ENCODE measurements at regions of chr5 and their contacts with region 1.

Region 1: DNA sequence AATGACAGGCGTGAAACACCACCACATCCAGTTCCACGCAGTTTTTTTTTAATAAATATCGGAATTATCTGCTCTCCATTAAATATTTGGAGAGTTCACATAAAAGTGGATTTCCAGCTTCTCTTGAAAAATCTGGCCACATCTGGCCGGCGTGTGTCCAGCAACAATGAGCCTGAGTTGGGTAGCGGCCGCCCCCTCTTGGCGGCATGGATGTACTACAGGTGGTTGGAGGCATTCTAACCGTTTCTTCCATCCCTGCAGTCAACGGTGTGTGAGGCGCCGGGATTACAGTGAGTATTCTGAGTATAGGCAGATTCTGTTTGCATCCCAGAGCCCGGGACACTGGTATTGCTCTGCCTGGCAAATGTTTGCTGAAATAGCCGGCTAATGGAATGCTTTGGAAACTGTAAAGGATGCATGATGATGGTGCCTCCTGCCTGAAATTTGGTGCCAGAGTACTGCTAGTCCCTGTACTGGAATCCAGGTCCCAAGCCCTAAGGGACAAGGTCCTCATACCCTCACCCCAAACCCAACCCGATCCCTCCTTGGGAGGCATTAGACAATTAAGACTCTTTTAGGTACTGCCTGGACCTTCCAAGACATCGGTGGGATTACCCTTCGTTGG is 13.6 kb upstream of the GM2A start:
- DNase-seq: peak in 8 of 9 experiments; percentile 38 to 77 (median 63)
- ATAC-seq: peak; percentile 87
- H3K4me3 ChIP-seq: no peak overlapping the region
- H3K4me3 Mint-ChIP-seq: peak overlapping the region; percentile 57
- H3K27ac ChIP-seq: no peak overlapping the region
- H3K27ac Mint-ChIP-seq: no peak overlapping the region
- H3K4me1 ChIP-seq: peaks cover 23% of the 10 kb centered on the region
- H3K4me1 Mint-ChIP-seq: peaks cover 38% of the 10 kb centered on the region
- H3K27me3 ChIP-seq: no peaks in the 10 kb centered on the region
- H3K27me3 Mint-ChIP-seq: no peaks in the 10 kb centered on the region
- CTCF ChIP-seq: peak; percentile 100

Region 2: DNA sequence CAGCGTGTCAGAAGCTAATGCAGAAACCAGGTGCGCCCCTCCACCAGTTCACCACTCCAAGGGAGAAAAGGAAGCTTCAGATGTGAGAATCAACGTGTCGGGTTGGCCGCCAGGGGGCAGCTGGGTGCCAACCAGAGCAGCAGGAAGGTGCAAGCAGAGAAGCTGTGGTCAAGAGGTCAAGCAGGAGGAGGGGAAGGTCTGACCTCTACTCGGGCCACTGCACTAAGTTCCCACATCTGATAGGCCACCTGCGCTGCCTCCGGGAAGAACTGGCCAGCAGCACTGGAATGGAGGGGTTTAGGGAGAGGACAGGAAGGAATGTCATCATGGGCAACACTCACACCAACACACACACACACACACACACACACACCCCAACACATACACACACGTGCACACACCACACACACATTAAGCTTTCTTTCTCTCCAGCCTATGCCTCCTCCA is 113.1 kb before region 1 on chr5:
- CTCF ChIA-PET with region 1: interaction called, 61 read pairs
- POLR2A ChIA-PET with region 1: interaction called, 8 read pairs
- intact Hi-C with region 1: loop called (anchors 1 to 2 kb)
- DNase-seq: peak; percentile 34 to 82 (median 66)
- ATAC-seq: peak; percentile 37
- H3K4me3 ChIP-seq: no peak overlapping the region
- H3K4me3 Mint-ChIP-seq: no peak overlapping the region
- H3K27ac ChIP-seq: peak overlapping the region; percentile 12 to 54
- H3K27ac Mint-ChIP-seq: peak overlapping the region; percentile 92
- H3K4me1 ChIP-seq: peaks cover 41% of the 10 kb centered on the region
- H3K4me1 Mint-ChIP-seq: peaks cover 54% of the 10 kb centered on the region
- H3K27me3 ChIP-seq: no peaks in the 10 kb centered on the region
- H3K27me3 Mint-ChIP-seq: no peaks in the 10 kb centered on the region
- CTCF ChIP-seq: peak; percentile 78

Region 3: GRCh38 chr5:151141535-151141934 is 97.8 kb before region 1 on chr5:
- CTCF ChIA-PET with region 1: interaction called, 10 read pairs
- POLR2A ChIA-PET with region 1: interaction called, 4 read pairs
- intact Hi-C with region 1: no loop called
- DNase-seq: peak in 8 of 9 experiments; percentile 42 to 85 (median 69)
- ATAC-seq: peak; percentile 51
- H3K4me3 ChIP-seq: peak overlapping the region; percentile 10 to 43
- H3K4me3 Mint-ChIP-seq: peak overlapping the region; percentile 82
- H3K27ac ChIP-seq: peak overlapping the region; percentile 26 to 90
- H3K27ac Mint-ChIP-seq: peak overlapping the region; percentile 95
- H3K4me1 ChIP-seq: peaks cover 93% of the 10 kb centered on the region
- H3K4me1 Mint-ChIP-seq: peaks cover 98% of the 10 kb centered on the region
- H3K27me3 ChIP-seq: no peaks in the 10 kb centered on the region
- H3K27me3 Mint-ChIP-seq: no peaks in the 10 kb centered on the region
- CTCF ChIP-seq: no peak

Region 4: GRCh38 chr5:151150471-151151262 is 88.7 kb before region 1 on chr5:
- CTCF ChIA-PET with region 1: interaction called, 16 read pairs
- POLR2A ChIA-PET with region 1: no interaction called
- intact Hi-C with region 1: no loop called
- DNase-seq: peak; percentile 48 to 91 (median 80)
- ATAC-seq: peak; percentile 83
- H3K4me3 ChIP-seq: peak overlapping the region in 1 of 2 experiments; percentile 37
- H3K4me3 Mint-ChIP-seq: peak overlapping the region; percentile 75
- H3K27ac ChIP-seq: peak overlapping the region; percentile 65 to 90
- H3K27ac Mint-ChIP-seq: peak overlapping the region; percentile 95
- H3K4me1 ChIP-seq: peaks cover 99% of the 10 kb centered on the region
- H3K4me1 Mint-ChIP-seq: peaks cover 97% of the 10 kb centered on the region
- H3K27me3 ChIP-seq: no peaks in the 10 kb centered on the region
- H3K27me3 Mint-ChIP-seq: no peaks in the 10 kb centered on the region
- CTCF ChIP-seq: no peak

Region 5: DNA sequence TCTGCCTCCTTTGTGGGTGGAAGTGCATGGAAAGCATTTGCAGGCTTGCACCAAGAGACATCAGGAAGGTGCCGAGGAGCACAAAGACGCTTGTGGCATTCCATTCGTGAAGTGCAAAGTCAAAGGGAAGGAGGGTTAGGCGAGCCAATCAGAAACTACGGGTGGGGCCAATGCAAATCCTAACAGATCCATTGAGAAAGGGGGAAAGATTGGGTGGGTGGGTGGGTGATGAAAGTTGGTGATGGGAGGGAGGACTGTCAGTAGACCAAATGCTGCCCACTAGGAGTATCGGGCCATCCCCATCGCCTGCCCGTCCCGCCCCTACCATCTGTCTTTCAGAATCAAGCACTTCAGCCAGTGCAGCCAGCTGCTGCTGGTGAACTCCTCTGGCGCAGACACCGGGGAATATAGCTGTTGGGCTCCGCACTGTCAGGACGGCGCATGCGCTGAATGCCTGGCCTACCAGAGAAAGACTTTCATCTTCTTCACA is 64.7 kb before region 1 on chr5:
- CTCF ChIA-PET with region 1: interaction called, 169 read pairs
- POLR2A ChIA-PET with region 1: interaction called, 3 read pairs
- intact Hi-C with region 1: no loop called
- DNase-seq: peak in 1 of 9 experiments; percentile 34
- ATAC-seq: no peak
- H3K4me3 ChIP-seq: no peak overlapping the region
- H3K4me3 Mint-ChIP-seq: no peak overlapping the region
- H3K27ac ChIP-seq: no peak overlapping the region
- H3K27ac Mint-ChIP-seq: peak overlapping the region; percentile 73
- H3K4me1 ChIP-seq: peaks cover 5% of the 10 kb centered on the region
- H3K4me1 Mint-ChIP-seq: peaks cover 33% of the 10 kb centered on the region
- H3K27me3 ChIP-seq: no peaks in the 10 kb centered on the region
- H3K27me3 Mint-ChIP-seq: no peaks in the 10 kb centered on the region
- CTCF ChIP-seq: no peak

Region 6: DNA sequence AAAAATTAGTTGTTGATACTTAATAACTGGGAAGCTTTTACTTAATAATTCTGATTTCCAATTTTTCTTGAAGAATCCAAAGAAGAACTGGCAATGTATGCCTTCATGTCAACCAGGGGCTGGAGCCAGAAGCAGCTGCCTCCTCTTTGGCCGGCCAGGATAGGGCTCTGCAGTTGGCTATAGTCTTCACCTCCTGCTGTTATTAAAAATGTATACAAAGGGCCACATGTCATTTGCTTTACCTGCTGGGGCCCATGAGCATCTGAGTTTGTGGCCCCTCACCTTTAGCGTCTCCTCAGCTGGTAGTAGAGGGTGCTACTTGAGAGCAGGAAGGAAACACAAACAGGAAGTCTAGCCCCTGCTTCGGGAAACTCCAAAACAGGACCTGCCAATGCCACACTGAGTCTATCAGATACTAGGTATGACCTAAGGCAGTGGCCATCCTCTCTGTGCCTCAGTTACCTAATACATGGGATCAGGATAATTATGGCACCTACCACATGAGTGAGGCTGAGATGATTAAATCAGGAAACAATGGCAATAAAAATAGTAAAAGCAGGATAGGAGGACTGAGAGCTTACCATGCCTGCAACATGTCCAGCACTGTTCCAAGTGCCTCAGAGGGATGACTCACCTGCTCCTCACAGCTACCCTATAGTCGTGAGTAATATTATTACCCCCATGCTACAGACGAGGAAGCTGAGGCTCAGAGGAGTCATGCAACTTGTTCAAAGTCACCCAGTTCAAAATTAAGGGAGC is 36.8 kb before region 1 on chr5:
- CTCF ChIA-PET with region 1: interaction called, 7 read pairs
- POLR2A ChIA-PET with region 1: interaction called, 5 read pairs
- intact Hi-C with region 1: loop called in 1 of 2 experiments (anchors 2 kb)
- DNase-seq: peak in 6 of 9 experiments; percentile 33 to 79 (median 48)
- ATAC-seq: peak; percentile 84
- H3K4me3 ChIP-seq: no peak overlapping the region
- H3K4me3 Mint-ChIP-seq: peak overlapping the region; percentile 47
- H3K27ac ChIP-seq: peak overlapping the region in 1 of 2 experiments; percentile 70
- H3K27ac Mint-ChIP-seq: peak overlapping the region; percentile 90
- H3K4me1 ChIP-seq: peaks cover 32% of the 10 kb centered on the region
- H3K4me1 Mint-ChIP-seq: peaks cover 35% of the 10 kb centered on the region
- H3K27me3 ChIP-seq: no peaks in the 10 kb centered on the region
- H3K27me3 Mint-ChIP-seq: no peaks in the 10 kb centered on the region
- CTCF ChIP-seq: no peak

Region 7: GRCh38 chr5:151223469-151224264 is 15.7 kb before region 1 on chr5 and contains the start of gene CCDC69:
- CTCF ChIA-PET with region 1: interaction called, 40 read pairs
- POLR2A ChIA-PET with region 1: interaction called, 25 read pairs
- intact Hi-C with region 1: loop called in 1 of 2 experiments (anchors 1 kb)
- DNase-seq: peak in 8 of 9 experiments; percentile 34 to 78 (median 58)
- ATAC-seq: peak; percentile 47
- H3K4me3 ChIP-seq: peak within 1 kb of the TSS; percentile 67 to 95
- H3K4me3 Mint-ChIP-seq: peak within 1 kb of the TSS; percentile 89
- H3K27ac ChIP-seq: peak within 1 kb of the TSS; percentile 69 to 86
- H3K27ac Mint-ChIP-seq: peak within 1 kb of the TSS; percentile 96
- H3K4me1 ChIP-seq: peaks cover 58% of the 10 kb centered on the region
- H3K4me1 Mint-ChIP-seq: peaks cover 58% of the 10 kb centered on the region
- H3K27me3 ChIP-seq: no peaks in the 10 kb centered on the region
- H3K27me3 Mint-ChIP-seq: no peaks in the 10 kb centered on the region
- CTCF ChIP-seq: no peak
- total RNA-seq, gene CCDC69: 96.3 to 98.5 TPM